ENCODE measurements at regions of chr19 and their contacts with region 1.

Region 1: GRCh38 chr19:41353466-41354342 is at the start of gene TGFB1:
- DNase-seq: peak; percentile 91 to 98 (median 96)
- ATAC-seq: peak; percentile 69
- H3K4me3 ChIP-seq: peak within 1 kb of the TSS; percentile 74 to 79
- H3K4me3 Mint-ChIP-seq: peak within 1 kb of the TSS; percentile 95
- H3K27ac ChIP-seq: peak within 1 kb of the TSS; percentile 76 to 82
- H3K27ac Mint-ChIP-seq: peak within 1 kb of the TSS; percentile 96
- H3K4me1 ChIP-seq: peaks cover 69% of the 10 kb centered on the region
- H3K4me1 Mint-ChIP-seq: peaks cover 60% of the 10 kb centered on the region
- H3K27me3 ChIP-seq: no peaks in the 10 kb centered on the region
- H3K27me3 Mint-ChIP-seq: no peaks in the 10 kb centered on the region
- CTCF ChIP-seq: peak; percentile 85
- total RNA-seq, gene TGFB1: 652 to 710 TPM

Region 2: DNA sequence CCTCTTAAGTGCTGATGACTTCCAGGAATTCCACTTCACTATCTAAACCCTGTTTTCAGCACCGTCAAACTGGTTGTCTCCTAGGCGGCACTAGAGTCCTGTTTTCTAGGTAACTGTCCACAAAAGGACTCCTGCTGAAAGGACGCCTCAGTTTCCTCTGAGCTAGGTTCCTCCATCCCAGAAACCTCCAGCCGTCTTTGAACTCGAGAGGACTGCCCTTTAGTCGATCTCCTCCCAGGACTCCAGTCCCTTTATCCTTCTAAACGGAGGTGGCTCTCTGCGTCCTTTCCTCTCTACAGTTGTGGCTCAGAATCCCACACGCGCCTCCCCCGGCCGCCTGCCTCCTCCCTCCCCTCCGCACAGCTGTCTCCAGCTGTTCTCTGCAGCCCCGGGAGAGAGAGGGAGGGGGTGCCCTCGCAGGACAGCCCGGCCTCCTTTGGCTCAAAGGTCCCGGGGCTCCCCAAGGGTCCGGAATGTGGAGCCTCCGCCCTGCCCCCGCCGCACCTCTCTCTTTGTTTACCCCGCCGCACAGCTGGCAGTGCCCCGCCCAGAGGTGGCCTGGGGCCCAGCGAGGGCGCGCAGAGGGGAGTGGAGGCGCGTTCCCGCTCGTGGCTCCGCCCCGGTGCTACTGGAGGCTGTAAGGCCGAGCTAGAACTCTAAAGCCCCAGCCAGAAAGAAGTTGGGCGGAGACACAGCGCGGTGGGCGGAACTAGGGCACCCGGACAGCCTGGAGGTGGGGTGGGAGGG is 750.1 kb before region 1 on chr19:
- CTCF ChIA-PET with region 1: no interaction called
- POLR2A ChIA-PET with region 1: no interaction called
- intact Hi-C with region 1: loop called in 1 of 2 experiments (anchors 10 kb)
- DNase-seq: peak; percentile 92 to 98 (median 96)
- ATAC-seq: peak; percentile 73
- H3K4me3 ChIP-seq: peak overlapping the region; percentile 54 to 58
- H3K4me3 Mint-ChIP-seq: peak overlapping the region; percentile 89
- H3K27ac ChIP-seq: peak overlapping the region in 1 of 2 experiments; percentile 39
- H3K27ac Mint-ChIP-seq: peak overlapping the region; percentile 76
- H3K4me1 ChIP-seq: peaks cover 73% of the 10 kb centered on the region
- H3K4me1 Mint-ChIP-seq: peaks cover 66% of the 10 kb centered on the region
- H3K27me3 ChIP-seq: peaks cover 23 to 34% of the 10 kb centered on the region in 2 experiments
- H3K27me3 Mint-ChIP-seq: peaks cover 20% of the 10 kb centered on the region
- CTCF ChIP-seq: no peak

Region 3: GRCh38 chr19:40739871-40740703 is 613.6 kb before region 1 on chr19:
- CTCF ChIA-PET with region 1: no interaction called
- POLR2A ChIA-PET with region 1: no interaction called
- intact Hi-C with region 1: no loop called
- DNase-seq: no peak
- ATAC-seq: no peak
- H3K4me3 ChIP-seq: no peak overlapping the region
- H3K4me3 Mint-ChIP-seq: no peak overlapping the region
- H3K27ac ChIP-seq: no peak overlapping the region
- H3K27ac Mint-ChIP-seq: no peak overlapping the region
- H3K4me1 ChIP-seq: no peaks in the 10 kb centered on the region
- H3K4me1 Mint-ChIP-seq: no peaks in the 10 kb centered on the region
- H3K27me3 ChIP-seq: no peaks in the 10 kb centered on the region
- H3K27me3 Mint-ChIP-seq: no peaks in the 10 kb centered on the region
- CTCF ChIP-seq: no peak

Region 4: GRCh38 chr19:40750059-40750873 is 603.4 kb before region 1 on chr19 and contains the start of gene ACTMAP:
- CTCF ChIA-PET with region 1: no interaction called
- POLR2A ChIA-PET with region 1: no interaction called
- intact Hi-C with region 1: loop called in 1 of 2 experiments (anchors 2 kb)
- DNase-seq: peak; percentile 98 to 100 (median 99)
- ATAC-seq: peak; percentile 87
- H3K4me3 ChIP-seq: peak within 1 kb of the TSS; percentile 75 to 87
- H3K4me3 Mint-ChIP-seq: peak within 1 kb of the TSS; percentile 93
- H3K27ac ChIP-seq: peak within 1 kb of the TSS; percentile 91 to 95
- H3K27ac Mint-ChIP-seq: peak within 1 kb of the TSS; percentile 98
- H3K4me1 ChIP-seq: peaks cover 36% of the 10 kb centered on the region
- H3K4me1 Mint-ChIP-seq: peaks cover 38% of the 10 kb centered on the region
- H3K27me3 ChIP-seq: no peaks in the 10 kb centered on the region
- H3K27me3 Mint-ChIP-seq: no peaks in the 10 kb centered on the region
- CTCF ChIP-seq: no peak
- total RNA-seq, gene ACTMAP: 3.5 to 3.8 TPM

Region 5: DNA sequence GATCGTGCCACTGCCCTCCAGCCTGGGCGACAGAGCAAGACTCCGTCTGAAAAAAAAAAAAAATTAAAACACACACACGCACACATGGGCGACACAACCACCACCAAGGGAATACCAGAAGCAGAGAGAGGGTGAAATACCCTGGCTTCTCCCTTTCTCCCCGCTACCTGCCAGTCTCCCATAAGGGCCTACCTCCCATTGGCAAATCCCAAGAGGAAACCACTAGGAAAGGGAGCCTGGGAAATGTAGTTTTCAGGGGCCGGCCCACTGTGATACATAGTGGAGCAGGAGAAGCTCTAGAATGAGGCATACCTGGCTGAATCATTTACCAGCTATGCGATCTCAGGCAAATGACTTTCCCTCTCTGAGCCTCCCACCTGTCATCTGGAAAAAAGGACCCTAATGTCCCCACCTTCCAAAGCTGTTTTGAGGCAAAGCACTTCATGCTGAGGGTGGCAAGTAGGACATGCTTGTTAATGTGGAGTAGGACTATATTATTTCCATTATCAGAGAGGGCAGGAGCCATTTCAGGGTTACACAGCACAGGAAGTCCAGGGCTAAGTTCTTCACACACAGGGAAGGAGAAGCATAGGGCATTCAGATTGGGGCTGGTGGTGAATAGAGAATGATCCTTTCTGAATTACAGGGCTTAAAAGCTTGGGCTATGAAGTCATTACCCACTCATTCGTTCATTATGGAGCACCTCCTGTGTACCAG is 103.8 kb before region 1 on chr19:
- CTCF ChIA-PET with region 1: no interaction called
- POLR2A ChIA-PET with region 1: no interaction called
- intact Hi-C with region 1: no loop called
- DNase-seq: no peak
- ATAC-seq: no peak
- H3K4me3 ChIP-seq: no peak overlapping the region
- H3K4me3 Mint-ChIP-seq: no peak overlapping the region
- H3K27ac ChIP-seq: no peak overlapping the region
- H3K27ac Mint-ChIP-seq: no peak overlapping the region
- H3K4me1 ChIP-seq: no peaks in the 10 kb centered on the region
- H3K4me1 Mint-ChIP-seq: no peaks in the 10 kb centered on the region
- H3K27me3 ChIP-seq: no peaks in the 10 kb centered on the region
- H3K27me3 Mint-ChIP-seq: peaks cover 8% of the 10 kb centered on the region
- CTCF ChIP-seq: no peak

Region 6: GRCh38 chr19:41310033-41310758 is 43.5 kb before region 1 on chr19 and contains the start of gene CCDC97:
- CTCF ChIA-PET with region 1: interaction called, 48 read pairs
- POLR2A ChIA-PET with region 1: interaction called, 15 read pairs
- intact Hi-C with region 1: loop called (anchors 1 kb)
- DNase-seq: peak; percentile 78 to 96 (median 90)
- ATAC-seq: peak; percentile 61
- H3K4me3 ChIP-seq: peak within 1 kb of the TSS; percentile 66 to 91
- H3K4me3 Mint-ChIP-seq: peak within 1 kb of the TSS; percentile 97
- H3K27ac ChIP-seq: peak within 1 kb of the TSS; percentile 88 to 93
- H3K27ac Mint-ChIP-seq: peak within 1 kb of the TSS; percentile 98
- H3K4me1 ChIP-seq: peaks cover 58% of the 10 kb centered on the region
- H3K4me1 Mint-ChIP-seq: peaks cover 74% of the 10 kb centered on the region
- H3K27me3 ChIP-seq: no peaks in the 10 kb centered on the region
- H3K27me3 Mint-ChIP-seq: no peaks in the 10 kb centered on the region
- CTCF ChIP-seq: no peak
- total RNA-seq, gene CCDC97: 32.0 to 33.5 TPM

Region 7: GRCh38 chr19:41327576-41328156 is 26.0 kb before region 1 on chr19:
- CTCF ChIA-PET with region 1: interaction called, 19 read pairs
- POLR2A ChIA-PET with region 1: interaction called, 25 read pairs
- intact Hi-C with region 1: loop called (anchors 1 kb)
- DNase-seq: peak in 8 of 9 experiments; percentile 68 to 98 (median 82)
- ATAC-seq: no peak
- H3K4me3 ChIP-seq: peak overlapping the region; percentile 21 to 23
- H3K4me3 Mint-ChIP-seq: peak overlapping the region; percentile 74
- H3K27ac ChIP-seq: peak overlapping the region; percentile 50 to 78
- H3K27ac Mint-ChIP-seq: peak overlapping the region; percentile 98
- H3K4me1 ChIP-seq: peaks cover 63% of the 10 kb centered on the region
- H3K4me1 Mint-ChIP-seq: peaks cover 69% of the 10 kb centered on the region
- H3K27me3 ChIP-seq: no peaks in the 10 kb centered on the region
- H3K27me3 Mint-ChIP-seq: no peaks in the 10 kb centered on the region
- CTCF ChIP-seq: no peak

Region 8: GRCh38 chr19:41363753-41364523 is 10.2 kb after region 1 on chr19 and contains the start of gene B9D2:
- CTCF ChIA-PET with region 1: interaction called, 41 read pairs
- POLR2A ChIA-PET with region 1: interaction called, 57 read pairs
- intact Hi-C with region 1: loop called (anchors 1 kb)
- DNase-seq: peak; percentile 95 to 99 (median 98)
- ATAC-seq: peak; percentile 89
- H3K4me3 ChIP-seq: peak within 1 kb of the TSS; percentile 80 to 81
- H3K4me3 Mint-ChIP-seq: peak within 1 kb of the TSS; percentile 98
- H3K27ac ChIP-seq: peak within 1 kb of the TSS; percentile 99 to 100
- H3K27ac Mint-ChIP-seq: peak within 1 kb of the TSS; percentile 100
- H3K4me1 ChIP-seq: peaks cover 27% of the 10 kb centered on the region
- H3K4me1 Mint-ChIP-seq: peaks cover 30% of the 10 kb centered on the region
- H3K27me3 ChIP-seq: no peaks in the 10 kb centered on the region
- H3K27me3 Mint-ChIP-seq: no peaks in the 10 kb centered on the region
- CTCF ChIP-seq: no peak
- total RNA-seq, gene B9D2: 19.6 to 25.9 TPM

Region 9: DNA sequence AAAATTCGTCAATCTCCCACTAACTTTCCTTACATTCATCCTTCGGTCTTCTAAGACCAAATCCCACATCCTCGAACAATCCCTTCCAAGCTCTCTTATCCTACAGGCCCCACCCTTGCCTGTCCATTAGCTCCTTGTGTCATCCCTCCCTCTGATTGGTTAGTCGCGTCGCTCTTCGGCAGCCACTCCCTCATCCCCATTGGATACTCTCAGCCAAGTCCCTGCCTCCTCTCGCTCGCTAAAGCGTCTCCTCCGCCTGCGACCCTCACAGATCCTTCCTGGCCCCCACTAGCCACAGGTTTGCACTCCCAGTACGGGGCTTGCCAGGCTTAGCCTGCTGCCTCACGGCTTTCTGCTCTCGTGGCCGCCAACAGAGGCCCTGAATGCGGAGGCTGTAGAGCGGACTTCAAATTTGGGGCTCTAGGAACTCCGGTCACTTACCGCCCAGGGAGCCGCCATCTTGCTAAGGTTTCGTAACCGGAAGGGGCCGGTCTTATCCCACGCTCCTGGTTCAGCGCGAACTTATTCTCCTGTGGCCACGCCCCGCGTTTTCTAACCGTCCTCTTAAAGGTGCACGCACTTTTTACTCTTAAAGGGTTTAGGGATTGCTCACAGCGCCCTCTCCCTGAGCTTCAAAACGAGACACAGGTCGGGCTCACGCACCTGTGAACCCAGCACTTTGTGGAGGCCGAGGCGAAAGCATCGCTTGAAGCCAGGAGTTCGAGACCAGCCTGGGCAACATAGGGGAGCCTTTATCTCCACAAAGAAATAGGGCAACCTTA is 85.9 kb after region 1 on chr19 and contains the start of gene DMAC2:
- CTCF ChIA-PET with region 1: interaction called, 3 read pairs
- POLR2A ChIA-PET with region 1: interaction called, 3 read pairs
- intact Hi-C with region 1: loop called in 1 of 2 experiments (anchors 5 kb)
- DNase-seq: peak; percentile 86 to 97 (median 93)
- ATAC-seq: peak; percentile 99
- H3K4me3 ChIP-seq: peak within 1 kb of the TSS; percentile 80 to 98
- H3K4me3 Mint-ChIP-seq: peak within 1 kb of the TSS; percentile 54
- H3K27ac ChIP-seq: peak within 1 kb of the TSS; percentile 66 to 93
- H3K27ac Mint-ChIP-seq: no peak within 1 kb of the TSS
- H3K4me1 ChIP-seq: peaks cover 11% of the 10 kb centered on the region
- H3K4me1 Mint-ChIP-seq: peaks cover 10% of the 10 kb centered on the region
- H3K27me3 ChIP-seq: no peaks in the 10 kb centered on the region
- H3K27me3 Mint-ChIP-seq: peaks cover 12% of the 10 kb centered on the region
- CTCF ChIP-seq: peak; percentile 60
- total RNA-seq, gene DMAC2: 23.2 to 25.7 TPM